Activated T-helper 1 cell treated with anti-CD3 and anti-CD28 coated beads, Interleukin-12 subunit alpha, Interleukin-12 subunit beta, Interleukin-2, Interleukin-4 antibody, amounts not matched to agents 30 ng/mL and 10 ng/mL and 1 ng/mL, durations not matched to agents 14 hours and 24 hours and 36 hours (primary cell): ENCODE measurements at regions of chr19 and their contacts with region 1.

Region 1: DNA sequence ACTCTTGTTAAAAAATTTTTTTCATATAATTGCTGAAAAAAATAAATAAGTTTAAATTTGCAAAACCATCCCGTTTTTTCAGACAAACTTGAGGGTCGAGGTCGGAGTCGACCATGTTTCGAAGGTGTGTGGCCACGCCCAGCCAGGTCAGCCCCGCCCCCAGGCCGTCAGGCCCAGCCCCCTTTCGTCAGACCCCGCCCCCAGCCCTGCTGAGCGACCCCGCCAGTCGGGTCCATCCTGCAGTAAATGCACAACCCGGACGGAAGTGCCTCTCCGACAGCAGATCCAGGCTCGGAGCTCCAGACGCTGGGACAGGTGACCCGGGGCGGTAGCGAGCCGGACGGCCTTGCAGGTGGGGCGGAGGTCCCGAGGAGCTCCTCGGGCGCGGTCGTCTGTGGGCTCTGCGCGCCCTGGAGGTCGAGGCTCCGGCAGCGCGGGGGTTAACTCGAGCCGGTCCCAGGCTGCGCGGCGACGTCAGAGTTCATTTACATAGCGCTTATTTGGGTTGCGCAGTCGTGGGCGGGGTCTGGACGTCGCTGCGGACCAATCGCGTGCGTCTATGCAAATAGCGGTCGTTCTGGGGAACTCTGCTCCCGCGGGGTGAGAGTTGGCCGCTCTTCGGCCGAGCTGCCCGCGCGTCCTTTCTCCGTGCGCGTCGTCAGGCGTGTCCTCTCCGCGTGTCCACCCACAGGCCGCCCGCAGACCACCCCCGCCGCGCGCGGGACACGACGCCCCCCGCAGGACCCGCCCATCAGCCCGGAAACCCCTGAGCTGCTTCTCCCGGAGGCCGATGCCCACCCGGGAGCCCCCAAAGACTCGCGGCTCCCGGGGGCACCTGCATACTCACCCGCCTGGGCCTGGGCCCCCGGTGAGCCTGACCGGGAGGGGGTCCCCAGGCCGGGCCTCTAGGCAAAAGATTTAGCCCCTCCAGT is at the start of gene OCEL1:
- DNase-seq: peak; percentile 95
- H3K4me3 Mint-ChIP-seq: peak within 1 kb of the TSS; percentile 89
- H3K27ac Mint-ChIP-seq: peak within 1 kb of the TSS; percentile 98
- H3K4me1 Mint-ChIP-seq: peaks cover 4% of the 10 kb centered on the region
- H3K27me3 Mint-ChIP-seq: no peaks in the 10 kb centered on the region
- total RNA-seq, gene OCEL1: 17.0 and 19.6 TPM in 2 replicates

Region 2: DNA sequence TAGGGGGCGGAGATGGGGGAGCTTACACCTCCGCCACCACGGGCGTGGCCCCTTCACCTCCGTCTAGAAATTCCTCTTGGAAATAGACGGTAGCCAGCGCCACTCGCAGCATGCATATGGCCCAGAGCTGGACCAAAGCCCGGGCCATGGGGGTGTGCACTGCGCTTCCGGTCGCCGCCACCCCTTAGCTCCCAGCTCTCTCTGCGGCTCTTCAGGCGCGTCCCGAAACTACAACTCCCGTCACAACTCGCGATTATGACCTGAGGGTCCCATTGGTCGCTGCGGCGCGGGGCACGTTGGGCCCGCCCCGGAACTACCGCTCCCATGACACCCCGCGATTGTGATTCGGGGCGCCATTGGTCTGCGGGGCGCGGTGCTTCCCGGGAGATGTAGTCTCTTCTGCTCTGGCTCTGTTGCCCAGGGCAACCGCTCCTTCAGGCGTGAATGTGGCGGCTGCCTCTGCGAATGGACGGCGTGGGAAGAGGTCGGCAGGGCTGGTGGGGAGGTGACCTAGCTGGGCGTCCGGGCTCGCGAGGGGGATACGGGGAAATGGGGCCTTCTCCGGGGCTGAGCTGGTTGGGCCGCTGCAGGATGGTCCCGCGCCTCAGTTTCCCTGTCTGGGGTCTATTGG is 730.2 kb before region 1 on chr19 and contains the starts of genes C19orf44 and CALR3:
- intact Hi-C with region 1: loop called (anchors 1 kb)
- DNase-seq: peak; percentile 98
- H3K4me3 Mint-ChIP-seq: peak within 1 kb of the TSS; percentile 93
- H3K27ac Mint-ChIP-seq: peak within 1 kb of the TSS; percentile 87
- H3K4me1 Mint-ChIP-seq: peaks cover 9% of the 10 kb centered on the region
- H3K27me3 Mint-ChIP-seq: no peaks in the 10 kb centered on the region
- total RNA-seq, gene C19orf44: 4.4 and 5.6 TPM in 2 replicates
- total RNA-seq, gene CALR3: not detected in 2 replicates

Region 3: GRCh38 chr19:17069218-17069617 is 157.1 kb before region 1 on chr19:
- intact Hi-C with region 1: loop called (anchors 2 kb)
- DNase-seq: no peak
- H3K4me3 Mint-ChIP-seq: no peak overlapping the region
- H3K27ac Mint-ChIP-seq: no peak overlapping the region
- H3K4me1 Mint-ChIP-seq: peaks cover 50% of the 10 kb centered on the region
- H3K27me3 Mint-ChIP-seq: no peaks in the 10 kb centered on the region

Region 4: GRCh38 chr19:17215125-17215971 is 10.9 kb before region 1 on chr19 and contains the start of gene USE1:
- intact Hi-C with region 1: loop called (anchors 1 kb)
- DNase-seq: peak; percentile 82
- H3K4me3 Mint-ChIP-seq: peak within 1 kb of the TSS; percentile 91
- H3K27ac Mint-ChIP-seq: peak within 1 kb of the TSS; percentile 99
- H3K4me1 Mint-ChIP-seq: peaks cover 11% of the 10 kb centered on the region
- H3K27me3 Mint-ChIP-seq: no peaks in the 10 kb centered on the region
- total RNA-seq, gene USE1: 34.6 and 36.0 TPM in 2 replicates

Region 5: DNA sequence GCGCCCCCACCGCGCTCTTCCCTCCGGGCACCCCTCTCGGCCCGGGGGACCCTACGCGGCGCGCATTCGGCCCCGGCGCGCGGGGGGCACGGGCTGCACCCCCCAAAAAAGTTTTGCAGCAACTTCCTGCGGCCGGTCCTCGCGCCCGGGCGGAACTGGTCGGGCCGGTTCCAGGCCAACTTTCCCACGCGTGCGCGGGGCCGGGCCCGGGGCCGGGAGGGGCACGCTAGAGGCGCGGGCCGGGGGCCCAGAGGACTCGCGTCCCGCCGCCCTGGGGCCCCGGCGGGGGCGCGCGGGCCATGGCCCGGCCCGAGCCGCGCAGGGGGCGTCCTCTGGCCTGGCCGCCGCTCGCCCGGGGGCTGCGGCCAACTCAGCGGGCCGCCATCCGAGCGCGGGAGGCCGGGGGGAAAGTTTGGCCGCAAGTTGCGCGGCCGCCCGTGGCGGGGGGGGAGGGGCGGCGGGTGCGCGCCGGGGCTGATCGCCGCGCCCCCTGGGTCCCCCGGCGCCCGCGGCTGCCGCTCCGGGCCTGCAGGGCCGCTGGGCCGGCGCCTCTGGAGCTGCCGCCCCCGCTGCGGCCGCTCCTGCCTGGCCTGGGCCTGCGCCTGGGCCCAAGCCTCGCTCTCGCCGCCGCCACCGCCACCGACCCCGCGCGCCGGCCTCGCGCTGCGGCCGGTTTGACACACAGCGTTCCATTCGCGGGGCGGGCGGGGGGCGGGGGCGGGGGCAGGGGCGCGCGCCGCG is 19.1 kb after region 1 on chr19 and contains the start of gene NR2F6:
- intact Hi-C with region 1: loop called (anchors 1 kb)
- DNase-seq: no peak
- H3K4me3 Mint-ChIP-seq: peak within 1 kb of the TSS; percentile 87
- H3K27ac Mint-ChIP-seq: peak within 1 kb of the TSS; percentile 77
- H3K4me1 Mint-ChIP-seq: no peaks in the 10 kb centered on the region
- H3K27me3 Mint-ChIP-seq: peaks cover 14% of the 10 kb centered on the region
- total RNA-seq, gene NR2F6: 14.3 and 14.4 TPM in 2 replicates

Region 6: GRCh38 chr19:17282488-17283255 is 56.4 kb after region 1 on chr19:
- intact Hi-C with region 1: loop called (anchors 5 kb)
- DNase-seq: peak; percentile 72
- H3K4me3 Mint-ChIP-seq: peak overlapping the region; percentile 89
- H3K27ac Mint-ChIP-seq: peak overlapping the region; percentile 58
- H3K4me1 Mint-ChIP-seq: peaks cover 4% of the 10 kb centered on the region
- H3K27me3 Mint-ChIP-seq: no peaks in the 10 kb centered on the region

Region 7: DNA sequence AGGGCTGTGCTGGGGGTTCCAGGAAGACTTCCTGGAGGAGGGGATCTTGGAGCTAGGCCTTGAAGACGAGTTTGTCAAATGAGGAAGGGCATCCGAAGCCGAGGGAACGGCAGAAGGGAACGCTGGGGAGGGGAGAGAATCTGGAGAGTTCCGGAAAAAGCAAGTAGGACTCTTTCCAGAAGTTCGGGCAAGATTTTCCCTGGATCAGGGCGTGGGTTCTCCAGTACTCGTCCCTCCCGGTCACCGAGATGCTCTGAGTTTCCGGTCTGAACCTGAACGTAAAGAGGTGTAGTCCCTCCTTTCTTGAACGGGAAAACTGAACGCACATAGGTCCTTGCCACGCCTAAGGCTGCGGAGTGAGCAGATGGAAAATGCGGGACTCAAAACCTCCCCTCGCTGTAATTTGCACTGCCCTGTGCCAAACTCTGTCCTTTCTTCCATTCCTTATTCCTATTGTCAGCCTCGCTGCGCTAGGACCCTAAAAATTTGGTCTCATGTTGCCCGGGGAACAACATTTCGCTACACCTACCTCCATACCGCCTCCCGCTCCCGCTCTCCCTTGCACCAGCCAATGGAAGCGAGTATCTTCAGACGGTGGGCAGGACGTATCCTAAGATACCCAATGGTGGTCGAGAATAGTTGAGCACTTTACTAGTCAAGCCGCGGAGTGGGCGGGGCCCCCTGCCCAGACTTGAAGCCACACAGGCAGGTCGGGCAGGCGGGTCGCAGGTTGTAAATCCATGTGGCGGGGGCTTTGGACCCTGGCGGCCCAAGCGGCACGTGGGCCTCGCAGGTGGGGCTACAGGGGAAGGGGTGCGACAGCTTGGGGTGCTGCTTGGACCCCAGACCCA is 110.8 kb after region 1 on chr19 and contains the start of gene GTPBP3:
- intact Hi-C with region 1: loop called (anchors 1 kb)
- DNase-seq: peak; percentile 95
- H3K4me3 Mint-ChIP-seq: peak within 1 kb of the TSS; percentile 87
- H3K27ac Mint-ChIP-seq: peak within 1 kb of the TSS; percentile 88
- H3K4me1 Mint-ChIP-seq: peaks cover 21% of the 10 kb centered on the region
- H3K27me3 Mint-ChIP-seq: peaks cover 2% of the 10 kb centered on the region
- total RNA-seq, gene GTPBP3: 64.2 and 72.0 TPM in 2 replicates